B cell (primary cell): ENCODE measurements at regions of chr7 and their contacts with region 1.

Region 1: GRCh38 chr7:47937065-47937683 is 11.1 kb downstream of the PKD1L1 start:
- DNase-seq: peak; percentile 81
- ATAC-seq: peak; percentile 91
- H3K4me3 ChIP-seq: peak overlapping the region in 3 of 5 experiments; percentile 10 to 20 (median 18)
- H3K4me3 Mint-ChIP-seq: peak overlapping the region; percentile 74
- H3K27ac ChIP-seq: no peak overlapping the region
- H3K27ac Mint-ChIP-seq: peak overlapping the region; percentile 64
- H3K4me1 ChIP-seq: peaks cover 29% of the 10 kb centered on the region in 2 donors
- H3K4me1 Mint-ChIP-seq: peaks cover 31% of the 10 kb centered on the region
- H3K27me3 ChIP-seq: no peaks in the 10 kb centered on the region
- H3K27me3 Mint-ChIP-seq: no peaks in the 10 kb centered on the region
- CTCF ChIP-seq: no peak

Region 2: DNA sequence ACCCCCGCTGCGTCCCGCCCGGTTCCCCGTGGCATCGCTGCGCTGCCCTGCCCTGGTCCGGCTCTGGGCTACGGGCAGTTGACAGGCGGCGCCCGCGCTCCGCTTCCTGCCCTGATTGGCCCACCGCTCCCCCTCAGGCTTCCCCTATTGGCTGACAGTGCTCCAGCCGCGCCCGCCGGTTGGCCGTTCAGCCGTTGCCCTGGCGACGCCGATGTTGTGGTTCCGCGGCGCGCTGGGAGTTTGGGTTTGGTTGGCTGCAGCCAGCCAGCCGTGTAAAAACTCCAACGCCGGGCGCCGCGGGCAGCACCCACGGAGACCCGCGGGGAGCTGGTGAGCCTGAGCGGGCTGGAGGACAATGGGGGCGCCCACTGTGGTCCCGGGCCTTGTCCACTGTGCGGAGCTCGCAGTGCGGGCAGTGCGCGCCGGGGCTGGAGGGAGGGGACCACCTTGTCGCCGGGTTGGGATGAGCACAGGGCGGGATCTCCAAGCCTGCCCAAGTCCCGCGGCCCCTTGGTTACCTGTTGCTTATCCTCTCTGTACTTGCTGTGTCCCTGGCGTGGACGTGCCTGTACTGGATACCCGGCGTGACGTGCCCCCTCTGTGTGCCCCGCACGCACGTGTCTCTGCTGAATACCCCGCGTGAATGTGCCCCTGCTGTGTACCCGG is 98.3 kb after region 1 on chr7 and contains the start of gene C7orf57:
- CTCF ChIA-PET with region 1: no interaction called
- POLR2A ChIA-PET with region 1: no interaction called
- intact Hi-C with region 1: loop called (anchors 1 kb)
- DNase-seq: peak; percentile 81
- ATAC-seq: peak; percentile 96
- H3K4me3 ChIP-seq: peak within 1 kb of the TSS; percentile 33 to 61 (median 44)
- H3K4me3 Mint-ChIP-seq: peak within 1 kb of the TSS; percentile 89
- H3K27ac ChIP-seq: no peak within 1 kb of the TSS
- H3K27ac Mint-ChIP-seq: peak within 1 kb of the TSS; percentile 8
- H3K4me1 ChIP-seq: peaks cover 14 to 15% of the 10 kb centered on the region in 2 donors
- H3K4me1 Mint-ChIP-seq: peaks cover 17% of the 10 kb centered on the region
- H3K27me3 ChIP-seq: peaks cover 0 to 40% (median 23%) of the 10 kb centered on the region in 4 experiments
- H3K27me3 Mint-ChIP-seq: peaks cover 38% of the 10 kb centered on the region
- CTCF ChIP-seq: no peak
- total RNA-seq, gene C7orf57: not detected in 2 replicates